Posterior cingulate gyrus (tissue), 11 donors: ENCODE measurements at regions of chr12 and their contacts with region 1.

Region 1: DNA sequence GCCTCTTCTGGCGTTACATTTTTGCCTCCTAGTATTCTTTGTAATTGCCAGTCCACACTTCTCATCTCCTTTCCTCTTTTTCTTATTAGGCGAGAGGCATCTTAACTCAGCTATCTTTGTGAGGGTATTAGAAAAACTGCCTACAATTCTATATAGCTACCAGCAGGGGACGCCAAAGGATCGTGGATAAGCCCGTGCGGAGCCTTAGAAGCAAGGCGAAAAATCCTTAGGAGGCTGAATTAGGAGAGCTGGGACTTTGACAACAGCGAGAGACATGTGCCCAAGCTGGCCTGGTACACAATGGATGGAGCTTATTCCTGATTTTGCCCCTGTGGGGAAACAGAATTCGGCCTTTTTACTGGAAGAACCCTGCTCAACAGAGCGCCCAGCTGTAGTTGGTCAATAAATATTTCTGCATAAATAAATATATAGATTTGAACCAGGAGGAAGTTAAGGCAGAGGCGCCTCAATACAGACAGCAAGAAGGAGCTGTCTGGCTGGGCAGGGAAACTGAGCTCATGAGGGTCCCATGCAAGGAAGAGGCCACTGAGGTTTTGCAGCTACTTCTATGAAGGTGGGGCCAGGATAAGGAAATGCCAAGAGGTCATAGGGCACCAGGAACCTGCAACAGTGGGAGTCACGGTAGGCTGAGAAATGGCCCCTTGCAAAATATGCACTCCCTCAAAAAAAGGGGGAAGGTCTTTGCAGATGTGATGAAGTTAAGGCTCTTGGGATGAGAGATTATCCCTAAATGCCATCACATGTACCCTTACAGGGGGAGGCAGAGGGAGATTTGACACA is 14.6 kb upstream of the RBM19 start:
- DNase-seq: peak in 7 of 10 donors; percentile 18 to 92 (median 44)

Region 2: GRCh38 chr12:114275932-114276785 is 295.4 kb after region 1 on chr12:
- intact Hi-C with region 1: no loop called
- DNase-seq: no peak

Region 3: DNA sequence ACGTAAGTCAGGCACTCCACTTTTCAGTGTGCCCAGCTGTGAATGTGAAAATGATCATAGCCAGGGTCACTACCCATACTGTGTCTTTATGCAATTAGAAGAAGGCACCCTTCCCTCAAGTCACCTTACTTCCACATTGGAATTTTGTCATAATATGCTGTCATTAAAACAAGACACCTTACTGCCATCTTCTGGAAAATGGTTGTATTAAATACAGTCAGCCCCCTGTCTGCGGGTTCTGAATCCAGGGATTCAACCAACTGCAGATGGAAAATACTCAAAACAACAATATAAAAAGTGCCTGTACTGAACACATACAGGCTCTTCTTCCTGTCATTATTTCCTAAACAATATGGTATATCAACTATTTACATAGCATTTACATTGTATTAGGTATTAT is 495.4 kb after region 1 on chr12:
- intact Hi-C with region 1: loop called (anchors 1 kb)
- DNase-seq: no peak

Region 4: DNA sequence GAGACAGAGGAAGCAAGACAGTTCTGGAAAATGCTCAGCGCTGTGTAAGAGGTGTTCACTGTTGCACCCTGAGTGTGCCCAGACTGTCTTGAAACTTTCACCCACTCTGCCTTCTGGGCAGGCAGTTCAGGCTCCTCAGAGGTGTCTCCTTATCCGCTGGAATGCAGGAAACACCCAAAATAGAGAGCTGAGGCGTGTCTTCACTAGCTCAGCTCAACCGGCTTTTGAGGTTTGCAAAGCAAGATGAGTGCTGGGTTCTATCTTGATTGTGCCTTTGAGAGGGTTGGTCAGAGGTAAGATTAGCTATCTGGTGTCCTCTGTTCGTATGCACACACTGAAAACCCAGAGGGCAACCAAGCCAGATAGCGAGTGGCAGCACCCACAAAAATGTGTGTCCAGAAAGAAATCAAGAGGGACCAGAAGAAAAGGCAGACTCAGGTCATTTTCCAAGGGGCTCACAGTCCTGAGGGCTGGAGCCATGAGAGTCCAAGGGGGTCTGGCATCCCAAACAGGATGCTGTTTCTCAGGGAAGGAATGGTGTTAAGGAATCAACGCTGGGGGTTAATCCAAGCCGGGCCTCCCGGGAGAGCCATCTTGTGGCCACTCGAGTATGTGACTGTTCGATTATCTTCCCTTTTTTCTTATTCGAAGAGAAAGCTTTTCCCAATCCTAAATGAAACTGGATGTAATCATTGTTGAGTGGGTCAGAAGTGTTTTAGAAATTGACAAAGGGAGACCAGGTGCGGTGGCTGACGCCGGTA is 656.2 kb after region 1 on chr12:
- intact Hi-C with region 1: loop called (anchors 1 kb)
- DNase-seq: peak in 3 of 10 donors; percentile 13 to 81 (median 31)

Region 5: GRCh38 chr12:115895247-115895646 is 1914.5 kb after region 1 on chr12:
- intact Hi-C with region 1: loop called (anchors 10 kb)
- DNase-seq: no peak